ENCODE measurements at regions of chr17 and their contacts with region 1.

Region 1: DNA sequence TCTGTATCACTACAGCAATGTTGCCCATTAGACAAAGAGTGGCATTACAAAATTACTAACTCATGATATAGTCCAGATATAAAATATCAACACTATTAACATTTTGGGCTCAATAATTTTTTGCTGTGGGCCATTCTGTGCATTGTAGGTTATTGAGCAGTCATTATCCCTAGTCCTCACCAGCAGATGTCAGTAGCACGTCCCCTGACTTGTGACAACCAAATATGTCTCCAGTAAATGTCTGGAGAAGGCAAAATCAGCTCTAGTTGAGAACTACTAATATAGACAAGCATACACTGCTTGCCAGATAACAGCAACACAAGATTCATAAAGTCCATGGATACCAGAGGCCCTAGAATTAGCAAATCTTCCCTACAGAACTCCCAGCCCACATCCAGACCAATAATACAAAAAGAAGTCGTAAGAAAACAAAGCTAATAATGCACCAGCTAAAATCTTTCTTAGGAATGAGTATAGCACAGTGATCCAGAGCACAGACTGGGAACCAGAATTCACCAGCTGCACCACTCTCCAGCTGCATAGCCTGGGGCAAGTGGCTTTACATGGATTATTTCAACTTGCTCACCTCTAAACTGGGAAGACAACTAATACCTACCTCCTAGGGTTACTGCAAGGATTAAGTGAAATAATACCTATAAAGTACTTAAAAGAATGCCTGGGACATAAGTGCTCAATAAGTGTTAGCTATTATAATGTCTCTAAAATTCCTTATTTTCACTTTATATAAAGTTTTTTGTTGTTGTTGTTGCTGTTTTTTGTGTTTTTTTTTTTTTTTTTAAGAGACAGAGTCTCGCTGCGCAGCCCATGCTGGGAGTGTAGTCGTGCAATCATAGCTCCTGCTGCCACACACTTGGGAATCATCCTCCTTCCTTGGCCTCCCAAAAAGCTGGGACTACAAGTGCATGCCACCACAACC is 23.7 kb downstream of the HELZ start:
- DNase-seq: peak; percentile 81
- H3K4me3 Mint-ChIP-seq: no peak overlapping the region
- H3K27ac Mint-ChIP-seq: no peak overlapping the region
- H3K4me1 Mint-ChIP-seq: peaks cover 17% of the 10 kb centered on the region
- H3K27me3 Mint-ChIP-seq: no peaks in the 10 kb centered on the region

Region 2: GRCh38 chr17:67258821-67259468 is 37.6 kb after region 1 on chr17:
- intact Hi-C with region 1: loop called (anchors 5 kb)
- DNase-seq: peak; percentile 76
- H3K4me3 Mint-ChIP-seq: peak overlapping the region; percentile 69
- H3K27ac Mint-ChIP-seq: peak overlapping the region; percentile 66
- H3K4me1 Mint-ChIP-seq: peaks cover 34% of the 10 kb centered on the region
- H3K27me3 Mint-ChIP-seq: no peaks in the 10 kb centered on the region

Region 3: GRCh38 chr17:67293251-67294203 is 72.2 kb after region 1 on chr17:
- intact Hi-C with region 1: loop called (anchors 1 kb)
- DNase-seq: peak; percentile 90
- H3K4me3 Mint-ChIP-seq: no peak overlapping the region
- H3K27ac Mint-ChIP-seq: no peak overlapping the region
- H3K4me1 Mint-ChIP-seq: peaks cover 2% of the 10 kb centered on the region
- H3K27me3 Mint-ChIP-seq: peaks cover 2% of the 10 kb centered on the region

Measured in activated CD4-positive, alpha-beta T cell treated with anti-CD3 and anti-CD28 coated beads, Interleukin-2, amount 10 ng/mL, durations not matched to agents 24 days and 14 days (primary cell).